Naive thymus-derived CD4-positive, alpha-beta T cell (primary cell): ENCODE measurements at regions of chr3 and their contacts with region 1.

Region 1: GRCh38 chr3:153513236-153513635 is 351.2 kb downstream of the RAP2B start:
- DNase-seq: peak in 5 of 9 donors; percentile 19 to 25 (median 21)
- ATAC-seq: peak; percentile 38
- H3K4me3 ChIP-seq: no peak overlapping the region
- H3K4me3 Mint-ChIP-seq: no peak overlapping the region
- H3K27ac ChIP-seq: no peak overlapping the region
- H3K27ac Mint-ChIP-seq: no peak overlapping the region
- H3K4me1 ChIP-seq: no peaks in the 10 kb centered on the region
- H3K4me1 Mint-ChIP-seq: no peaks in the 10 kb centered on the region
- H3K27me3 ChIP-seq: no peaks in the 10 kb centered on the region
- H3K27me3 Mint-ChIP-seq: no peaks in the 10 kb centered on the region

Region 2: GRCh38 chr3:153061938-153062528 is 451.2 kb before region 1 on chr3:
- CTCF ChIA-PET with region 1: no interaction called
- POLR2A ChIA-PET with region 1: no interaction called
- intact Hi-C with region 1: no loop called
- DNase-seq: no peak
- ATAC-seq: no peak
- H3K4me3 ChIP-seq: no peak overlapping the region
- H3K4me3 Mint-ChIP-seq: no peak overlapping the region
- H3K27ac ChIP-seq: no peak overlapping the region
- H3K27ac Mint-ChIP-seq: no peak overlapping the region
- H3K4me1 ChIP-seq: no peaks in the 10 kb centered on the region
- H3K4me1 Mint-ChIP-seq: no peaks in the 10 kb centered on the region
- H3K27me3 ChIP-seq: no peaks in the 10 kb centered on the region
- H3K27me3 Mint-ChIP-seq: peaks cover 0 to 3% (median 0%) of the 10 kb centered on the region in 5 donors

Region 3: GRCh38 chr3:153462545-153462944 is 50.7 kb before region 1 on chr3:
- CTCF ChIA-PET with region 1: no interaction called
- POLR2A ChIA-PET with region 1: no interaction called
- intact Hi-C with region 1: no loop called
- DNase-seq: peak in 7 of 9 donors; percentile 12 to 57 (median 47)
- ATAC-seq: peak; percentile 64
- H3K4me3 ChIP-seq: no peak overlapping the region
- H3K4me3 Mint-ChIP-seq: peak overlapping the region in 7 of 10 donors; percentile 14 to 54 (median 44)
- H3K27ac ChIP-seq: peak overlapping the region; percentile 21
- H3K27ac Mint-ChIP-seq: peak overlapping the region in 5 of 9 donors; percentile 34 to 68 (median 39)
- H3K4me1 ChIP-seq: peaks cover 6 to 9% of the 10 kb centered on the region in 2 donors
- H3K4me1 Mint-ChIP-seq: peaks cover 9 to 54% (median 44%) of the 10 kb centered on the region in 7 donors
- H3K27me3 ChIP-seq: no peaks in the 10 kb centered on the region
- H3K27me3 Mint-ChIP-seq: peaks cover 0 to under 1% (median 0%) of the 10 kb centered on the region in 5 donors

Region 4: DNA sequence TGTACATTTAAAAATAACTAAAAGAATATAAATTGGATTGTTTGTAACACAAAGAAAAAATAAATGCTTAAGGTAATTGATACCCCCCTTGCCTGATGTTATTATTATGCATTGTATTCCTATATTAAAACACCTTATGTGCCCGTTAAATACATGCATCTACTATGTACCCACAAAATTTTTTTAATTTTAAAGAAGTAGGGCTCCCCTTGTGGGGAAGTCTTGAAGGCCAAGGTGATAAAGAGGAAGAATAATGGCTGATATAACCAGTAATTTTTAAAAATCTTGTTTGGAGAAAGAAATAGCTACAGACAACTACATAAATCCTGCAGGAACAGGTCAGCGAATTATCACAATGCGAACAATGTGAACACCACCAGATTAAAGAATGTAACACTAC is 156.3 kb after region 1 on chr3:
- CTCF ChIA-PET with region 1: interaction called, 3 read pairs
- POLR2A ChIA-PET with region 1: no interaction called
- intact Hi-C with region 1: loop called in 1 of 2 experiments (anchors 2 kb)
- DNase-seq: peak in 4 of 9 donors; percentile 5 to 10 (median 8)
- ATAC-seq: no peak
- H3K4me3 ChIP-seq: no peak overlapping the region
- H3K4me3 Mint-ChIP-seq: no peak overlapping the region
- H3K27ac ChIP-seq: no peak overlapping the region
- H3K27ac Mint-ChIP-seq: no peak overlapping the region
- H3K4me1 ChIP-seq: no peaks in the 10 kb centered on the region
- H3K4me1 Mint-ChIP-seq: peaks cover 0 to 10% (median 0%) of the 10 kb centered on the region in 7 donors
- H3K27me3 ChIP-seq: no peaks in the 10 kb centered on the region
- H3K27me3 Mint-ChIP-seq: peaks cover 0 to 4% (median 0%) of the 10 kb centered on the region in 5 donors

Region 5: GRCh38 chr3:153688301-153689120 is 175.3 kb after region 1 on chr3:
- CTCF ChIA-PET with region 1: interaction called, 4 read pairs
- POLR2A ChIA-PET with region 1: no interaction called
- intact Hi-C with region 1: loop called in 1 of 2 experiments (anchors 2 kb)
- DNase-seq: no peak
- ATAC-seq: no peak
- H3K4me3 ChIP-seq: no peak overlapping the region
- H3K4me3 Mint-ChIP-seq: no peak overlapping the region
- H3K27ac ChIP-seq: no peak overlapping the region
- H3K27ac Mint-ChIP-seq: no peak overlapping the region
- H3K4me1 ChIP-seq: no peaks in the 10 kb centered on the region
- H3K4me1 Mint-ChIP-seq: peaks cover 0 to 6% (median 0%) of the 10 kb centered on the region in 7 donors
- H3K27me3 ChIP-seq: no peaks in the 10 kb centered on the region
- H3K27me3 Mint-ChIP-seq: no peaks in the 10 kb centered on the region